ENCODE measurements at regions of chr3 and their contacts with region 1.

Region 1: DNA sequence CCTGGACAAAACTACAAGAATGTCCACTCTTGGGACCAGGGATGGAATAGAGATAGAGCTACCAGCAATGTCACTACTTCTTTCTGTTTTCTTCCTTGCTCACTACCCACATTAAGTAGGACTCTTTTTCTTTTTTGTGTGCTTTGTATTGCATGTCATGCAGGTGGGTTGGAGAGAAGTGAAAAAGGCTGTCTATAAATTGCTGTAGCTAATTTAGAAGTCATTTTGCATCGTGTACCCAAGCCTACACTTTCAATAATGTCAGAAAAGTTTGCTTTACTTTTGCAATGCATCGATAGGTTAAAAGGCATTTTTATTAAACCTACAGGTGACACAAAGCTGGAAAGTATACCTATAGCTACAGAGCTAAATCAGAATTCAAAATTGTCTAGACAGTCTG is 58.9 kb downstream of the GTF2E1 start:
- DNase-seq: no peak
- H3K4me3 ChIP-seq: no peak overlapping the region
- H3K27ac ChIP-seq: no peak overlapping the region
- H3K4me1 ChIP-seq: peaks cover 8% of the 10 kb centered on the region
- H3K27me3 ChIP-seq: no peaks in the 10 kb centered on the region
- CTCF ChIP-seq: no peak

Region 2: DNA sequence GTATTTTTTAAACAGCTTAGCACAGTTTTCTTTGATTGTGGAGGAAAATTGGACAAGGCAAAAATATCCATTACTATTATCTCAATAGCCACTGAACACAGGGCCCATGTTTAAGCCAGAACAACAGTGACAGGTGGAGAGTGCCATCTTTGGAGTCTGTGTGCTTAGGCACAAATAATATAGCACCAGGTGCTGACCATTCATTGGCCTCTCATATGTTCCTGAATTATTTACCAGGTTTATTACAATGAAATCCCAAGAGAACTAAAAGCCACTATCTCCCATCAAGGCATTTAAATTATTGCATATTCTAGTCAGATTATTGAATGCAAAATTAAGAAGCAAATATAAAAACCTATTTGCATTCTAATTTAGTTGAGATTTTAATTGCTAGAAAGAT is 556.1 kb before region 1 on chr3:
- CTCF ChIA-PET with region 1: no interaction called
- POLR2A ChIA-PET with region 1: no interaction called
- intact Hi-C with region 1: loop called (anchors 5 kb)
- DNase-seq: no peak
- H3K4me3 ChIP-seq: no peak overlapping the region
- H3K27ac ChIP-seq: no peak overlapping the region
- H3K4me1 ChIP-seq: no peaks in the 10 kb centered on the region
- H3K27me3 ChIP-seq: no peaks in the 10 kb centered on the region
- CTCF ChIP-seq: no peak

Region 3: DNA sequence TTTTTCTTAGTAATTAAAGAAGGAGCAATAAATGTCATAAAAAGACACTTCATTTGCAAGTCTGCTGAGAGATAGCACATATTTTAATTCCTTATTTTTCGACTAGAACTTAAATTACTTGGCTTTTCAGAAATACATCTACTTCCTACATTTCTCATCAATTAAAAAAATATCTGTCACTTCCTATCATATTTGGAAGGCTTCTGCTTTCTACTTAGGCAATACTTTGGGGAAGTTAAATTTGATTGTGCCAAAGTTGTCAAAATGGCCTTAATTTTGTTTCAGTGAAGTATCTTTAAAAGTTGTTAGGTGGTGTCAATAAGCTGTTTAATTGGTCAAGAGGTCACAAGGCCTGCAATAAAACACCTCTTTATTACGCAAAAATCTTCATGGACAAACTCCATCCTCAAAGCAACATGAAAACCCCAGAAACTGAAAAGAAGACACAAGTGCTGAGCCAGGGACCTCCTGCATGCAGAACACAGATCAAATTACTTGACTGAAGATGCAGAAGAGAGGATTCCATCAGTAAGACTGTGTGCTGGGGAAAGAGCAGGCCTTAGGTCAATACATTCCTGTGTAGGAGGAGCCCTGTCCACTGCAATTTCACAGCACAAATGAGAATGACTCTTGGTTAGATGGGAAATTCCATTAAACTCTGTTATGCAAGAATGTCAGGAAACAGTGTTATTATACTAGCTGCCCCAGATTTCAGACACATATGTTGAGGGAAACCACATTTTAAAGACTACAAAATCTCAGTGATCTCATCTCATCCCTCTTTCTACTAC is 302.7 kb before region 1 on chr3:
- CTCF ChIA-PET with region 1: no interaction called
- POLR2A ChIA-PET with region 1: no interaction called
- intact Hi-C with region 1: no loop called
- DNase-seq: peak; percentile 19
- H3K4me3 ChIP-seq: no peak overlapping the region
- H3K27ac ChIP-seq: no peak overlapping the region
- H3K4me1 ChIP-seq: no peaks in the 10 kb centered on the region
- H3K27me3 ChIP-seq: no peaks in the 10 kb centered on the region
- CTCF ChIP-seq: no peak

Region 4: DNA sequence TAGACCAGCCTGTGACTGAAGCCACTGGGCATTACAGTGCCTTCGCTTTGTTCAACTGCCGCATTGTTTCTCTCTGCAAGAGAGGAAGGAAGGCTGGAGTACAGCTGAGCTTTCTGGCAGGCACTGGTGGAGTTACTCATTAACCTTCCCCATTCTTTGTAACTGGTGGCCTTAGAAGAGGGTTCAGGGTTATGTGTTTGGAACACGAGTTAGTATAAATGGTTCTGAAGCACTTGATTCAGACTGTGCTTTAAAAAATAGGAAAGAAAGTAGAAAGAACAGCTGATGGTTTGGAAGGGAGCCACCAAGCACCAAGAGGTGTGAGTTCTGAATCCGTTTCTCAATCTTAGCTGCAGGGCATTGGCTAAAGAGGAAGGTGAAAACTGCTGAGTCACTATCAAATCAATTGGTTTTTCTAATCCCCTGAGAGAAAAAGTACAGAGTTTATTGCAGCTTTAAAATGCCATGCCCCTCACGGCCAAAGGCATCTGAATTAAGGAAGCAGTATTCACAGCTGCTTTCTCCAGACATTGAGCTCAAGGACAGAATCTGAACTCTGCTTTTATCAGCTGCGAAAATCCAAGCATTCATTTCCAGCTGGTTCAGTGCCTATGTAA is 123.0 kb before region 1 on chr3:
- CTCF ChIA-PET with region 1: no interaction called
- POLR2A ChIA-PET with region 1: no interaction called
- intact Hi-C with region 1: no loop called
- DNase-seq: peak; percentile 60
- H3K4me3 ChIP-seq: no peak overlapping the region
- H3K27ac ChIP-seq: no peak overlapping the region
- H3K4me1 ChIP-seq: peaks cover 21% of the 10 kb centered on the region
- H3K27me3 ChIP-seq: no peaks in the 10 kb centered on the region
- CTCF ChIP-seq: no peak

Measured in A673 (cell line).